K562 (cell line): ENCODE measurements at regions of chr2 and their contacts with region 1.

Region 1: GRCh38 chr2:11778923-11779757 is 32.7 kb downstream of the LPIN1 start:
- DNase-seq: peak; percentile 91 to 92 (median 92)
- ATAC-seq: peak; percentile 100
- H3K4me3 ChIP-seq: no peak overlapping the region
- H3K27ac ChIP-seq: no peak overlapping the region
- H3K4me1 ChIP-seq: peaks cover 4 to 5% of the 10 kb centered on the region in 2 experiments
- H3K27me3 ChIP-seq: no peaks in the 10 kb centered on the region
- CTCF ChIP-seq: peak; percentile 93 to 98 (median 94)
- EP300 ChIP-seq: peak; percentile 32; the same call in 1 of the 2 replicates
- POLR2A ChIP-seq: no peak
- RAD21 ChIP-seq: peak; percentile 97 to 98

Region 2: DNA sequence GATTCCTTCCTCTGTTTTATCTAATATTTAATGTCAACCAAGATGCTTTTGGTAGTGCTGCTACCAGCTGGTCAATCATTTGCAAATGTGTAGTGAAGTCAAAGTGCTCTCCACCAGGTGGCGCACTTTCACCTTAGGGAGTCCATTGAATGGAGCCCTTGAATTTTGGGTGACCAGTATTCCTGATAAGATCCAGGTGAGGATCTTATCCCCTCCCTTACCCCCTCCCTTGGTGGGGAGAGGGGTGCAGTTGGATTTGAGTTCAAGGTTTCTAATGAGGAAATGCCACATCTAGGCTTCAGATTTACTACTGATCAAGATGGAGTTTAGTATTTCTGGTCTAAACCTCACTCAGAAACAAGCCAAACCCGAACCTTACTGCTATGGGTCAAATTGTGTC is 301.1 kb before region 1 on chr2:
- CTCF ChIA-PET with region 1: no interaction called
- POLR2A ChIA-PET with region 1: no interaction called
- in situ Hi-C with region 1: loop called (anchors 25 kb)
- intact Hi-C with region 1: no loop called
- DNase-seq: peak; percentile 63 to 88 (median 69)
- ATAC-seq: peak; percentile 92
- H3K4me3 ChIP-seq: no peak overlapping the region
- H3K27ac ChIP-seq: no peak overlapping the region
- H3K4me1 ChIP-seq: 0 out of 5 replicates have a peak, but pooled peaks cover 0 to under 1% of the 10 kb centered on the region in 2 experiments
- H3K27me3 ChIP-seq: peaks cover 14 to 28% of the 10 kb centered on the region in 2 experiments
- CTCF ChIP-seq: peak; percentile 82 to 89 (median 88)
- EP300 ChIP-seq: no peak
- POLR2A ChIP-seq: no peak
- RAD21 ChIP-seq: peak; percentile 87 to 93

Region 3: GRCh38 chr2:11602563-11603204 is 176.5 kb before region 1 on chr2:
- CTCF ChIA-PET with region 1: no interaction called
- POLR2A ChIA-PET with region 1: no interaction called
- in situ Hi-C with region 1: no loop called
- intact Hi-C with region 1: loop called (anchors 10 kb)
- DNase-seq: no peak
- ATAC-seq: no peak
- H3K4me3 ChIP-seq: no peak overlapping the region
- H3K27ac ChIP-seq: no peak overlapping the region
- H3K4me1 ChIP-seq: no peaks in the 10 kb centered on the region
- H3K27me3 ChIP-seq: peaks cover 62 to 63% of the 10 kb centered on the region in 2 experiments
- CTCF ChIP-seq: no peak
- EP300 ChIP-seq: no peak
- POLR2A ChIP-seq: no peak
- RAD21 ChIP-seq: no peak

Region 4: GRCh38 chr2:11688222-11689069 is 90.7 kb before region 1 on chr2:
- CTCF ChIA-PET with region 1: interaction called, 39 read pairs
- POLR2A ChIA-PET with region 1: interaction called, 3 read pairs
- in situ Hi-C with region 1: loop called (anchors 5 kb)
- intact Hi-C with region 1: loop called (anchors 1 kb)
- DNase-seq: peak; percentile 87 to 92 (median 89)
- ATAC-seq: peak; percentile 96
- H3K4me3 ChIP-seq: no peak overlapping the region
- H3K27ac ChIP-seq: no peak overlapping the region
- H3K4me1 ChIP-seq: peaks cover 0 to 6% of the 10 kb centered on the region in 2 experiments; a peak in 3 of 5 replicates
- H3K27me3 ChIP-seq: peaks cover 3 to 26% of the 10 kb centered on the region in 2 experiments; a peak in 3 of 5 replicates
- CTCF ChIP-seq: peak; percentile 89 to 94 (median 93)
- EP300 ChIP-seq: no peak
- POLR2A ChIP-seq: no peak
- RAD21 ChIP-seq: peak; percentile 76 to 79

Region 5: DNA sequence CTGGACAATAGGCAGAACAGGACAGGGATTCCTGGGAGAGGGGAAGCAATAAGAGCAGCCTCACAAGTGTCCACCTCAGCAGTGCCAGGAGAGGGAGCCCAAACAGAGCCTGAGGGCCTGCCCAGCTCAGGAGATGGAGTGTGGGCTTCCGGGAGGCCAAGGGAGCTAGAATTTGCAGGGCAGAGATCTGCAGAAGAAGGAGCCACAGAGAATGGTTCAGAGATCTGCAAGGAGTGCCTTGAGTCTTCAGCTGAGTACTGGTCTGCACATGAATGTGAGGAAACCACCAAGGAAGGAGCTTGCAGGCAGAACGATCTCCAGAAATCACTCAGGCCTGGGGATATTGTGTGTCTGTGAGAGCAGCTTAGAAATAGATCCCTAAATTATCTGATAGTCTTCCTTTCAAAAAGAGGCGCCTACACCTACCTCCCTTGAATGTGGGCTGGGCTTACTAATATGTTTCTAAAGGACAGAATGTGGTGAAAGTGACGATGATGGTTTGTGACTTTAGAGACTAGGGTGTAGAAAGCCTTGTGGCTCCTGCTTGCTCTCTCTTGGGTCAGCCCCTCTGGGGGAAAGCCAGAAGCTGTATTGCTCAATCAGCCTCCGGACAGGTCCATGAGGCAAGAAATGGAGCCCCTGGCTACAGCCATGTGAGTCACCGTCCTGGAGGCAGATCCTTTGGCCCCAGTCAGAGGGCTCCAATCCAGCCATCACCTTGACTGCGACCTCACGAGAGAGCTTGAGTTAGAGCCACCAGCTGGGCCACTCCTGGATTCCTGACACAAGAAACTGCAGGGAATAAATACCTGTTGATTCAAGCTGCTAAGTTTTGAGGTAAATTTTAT is 40.3 kb before region 1 on chr2:
- CTCF ChIA-PET with region 1: interaction called, 21 read pairs
- POLR2A ChIA-PET with region 1: no interaction called
- in situ Hi-C with region 1: no loop called
- intact Hi-C with region 1: loop called (anchors 1 kb)
- DNase-seq: peak in 3 of 4 experiments; percentile 36 to 70 (median 64)
- ATAC-seq: peak; percentile 91
- H3K4me3 ChIP-seq: no peak overlapping the region
- H3K27ac ChIP-seq: no peak overlapping the region
- H3K4me1 ChIP-seq: peaks cover 15 to 31% of the 10 kb centered on the region in 2 experiments; a peak in 4 of 5 replicates
- H3K27me3 ChIP-seq: peaks cover 3 to 5% of the 10 kb centered on the region in 2 experiments; a peak in 2 of 5 replicates
- CTCF ChIP-seq: peak; percentile 78 to 84 (median 78)
- EP300 ChIP-seq: no peak
- POLR2A ChIP-seq: no peak
- RAD21 ChIP-seq: peak; percentile 76 to 90

Region 6: DNA sequence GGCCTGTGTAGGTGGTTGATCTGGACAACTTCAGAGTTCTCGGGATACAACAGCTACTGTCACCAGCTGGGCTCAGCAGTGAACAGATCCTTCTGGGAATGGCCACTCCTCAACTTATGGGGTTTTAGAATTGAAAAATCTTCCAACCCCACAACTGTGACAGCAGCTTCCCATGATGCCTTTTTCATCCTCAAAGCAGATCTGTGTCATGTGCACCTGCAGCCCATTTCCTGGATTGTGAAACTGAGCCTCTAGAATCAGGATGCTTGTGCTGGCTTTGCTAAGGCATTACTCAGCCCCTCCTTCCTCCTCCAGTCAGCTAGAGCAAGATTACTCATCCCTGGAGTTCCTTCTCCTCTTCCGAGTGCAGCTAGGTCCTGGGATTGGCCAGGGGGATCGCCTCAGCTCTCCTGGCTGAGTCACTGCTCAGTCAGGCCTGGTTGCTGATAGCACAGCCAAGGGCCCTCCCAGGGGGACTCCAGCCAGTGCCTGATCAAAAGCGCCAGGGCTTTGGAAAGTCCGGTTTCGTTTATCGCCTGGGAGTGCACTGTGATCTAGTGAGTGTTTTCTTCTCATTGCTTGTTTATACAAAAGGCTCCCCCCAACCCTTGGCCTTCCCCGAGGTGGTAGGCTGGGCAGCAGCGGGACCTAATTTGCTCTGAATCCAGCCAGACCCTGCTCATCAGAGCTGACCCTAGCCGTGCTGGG is 35.1 kb before region 1 on chr2:
- CTCF ChIA-PET with region 1: interaction called, 21 read pairs
- POLR2A ChIA-PET with region 1: no interaction called
- in situ Hi-C with region 1: no loop called
- intact Hi-C with region 1: loop called (anchors 2 kb)
- DNase-seq: peak; percentile 96 to 98 (median 97)
- ATAC-seq: peak; percentile 85
- H3K4me3 ChIP-seq: peak overlapping the region; percentile 33
- H3K27ac ChIP-seq: peak overlapping the region; percentile 86
- H3K4me1 ChIP-seq: peaks cover 58 to 66% of the 10 kb centered on the region in 2 experiments; a peak in 4 of 5 replicates
- H3K27me3 ChIP-seq: no peaks in the 10 kb centered on the region
- CTCF ChIP-seq: 0 out of 6 replicates have a peak, but pooled peaks of 1 of the 3 experiments have one; percentile 15
- EP300 ChIP-seq: peak; percentile 90
- POLR2A ChIP-seq: no peak; the same call in 1 of the 2 replicates
- RAD21 ChIP-seq: no peak